Spleen (tissue), 13 donors: ENCODE measurements at regions of chr3 and their contacts with region 1.

Region 1: DNA sequence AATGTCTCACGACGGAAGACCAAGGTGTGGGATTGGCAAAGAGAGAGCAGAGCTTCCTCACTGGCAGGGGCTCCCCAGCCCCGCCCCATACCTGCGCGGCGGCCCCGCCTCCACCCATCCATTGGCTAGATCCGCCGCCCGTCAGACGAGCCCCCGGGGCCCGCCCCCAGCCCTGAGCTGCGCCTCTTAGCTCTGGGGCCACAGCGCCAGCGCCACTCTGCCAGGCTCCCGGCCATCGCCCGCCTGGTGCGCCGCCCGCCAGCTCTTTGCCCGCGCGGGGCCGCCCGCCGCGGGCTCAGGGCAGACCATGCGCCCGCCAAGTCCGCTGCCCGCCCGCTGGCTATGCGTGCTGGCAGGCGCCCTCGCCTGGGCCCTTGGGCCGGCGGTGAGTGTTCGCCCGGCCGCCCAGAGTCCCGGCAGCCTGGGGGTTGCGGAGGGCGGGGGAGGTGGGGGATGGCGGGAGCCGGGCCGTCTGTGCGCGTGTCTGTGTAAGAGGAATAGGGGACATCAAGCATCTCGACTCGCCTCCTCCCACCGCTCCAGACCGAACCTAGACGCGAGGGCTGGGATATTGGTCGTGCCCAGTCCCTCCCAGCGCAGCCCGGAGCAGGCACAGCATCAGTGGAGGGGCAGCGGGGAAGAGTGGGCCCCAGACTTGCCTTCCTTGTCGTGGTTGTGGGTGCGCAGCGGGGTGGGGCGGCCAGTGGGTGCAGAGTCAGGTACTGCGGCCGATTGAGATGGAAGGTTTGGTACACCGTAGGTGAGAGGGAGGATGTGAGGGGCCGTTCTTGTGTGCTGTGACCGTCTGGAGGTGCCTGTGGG is at the start of gene VIPR1:
- DNase-seq: peak; percentile 95
- H3K4me3 ChIP-seq: peak within 1 kb of the TSS; percentile 45 to 86 (median 56)
- H3K27ac ChIP-seq: peak within 1 kb of the TSS in 5 of 8 donors; percentile 17 to 72 (median 45)
- H3K4me1 ChIP-seq: peaks cover 10 to 52% (median 29%) of the 10 kb centered on the region in 6 donors
- H3K27me3 ChIP-seq: peaks cover 0 to 48% (median 13%) of the 10 kb centered on the region in 7 donors
- CTCF ChIP-seq: no peak
- POLR2A ChIP-seq: peak in 1 of 3 donors; percentile 38
- total RNA-seq, gene VIPR1: 6.8 to 16.3 (median 11.9) TPM

Region 2: DNA sequence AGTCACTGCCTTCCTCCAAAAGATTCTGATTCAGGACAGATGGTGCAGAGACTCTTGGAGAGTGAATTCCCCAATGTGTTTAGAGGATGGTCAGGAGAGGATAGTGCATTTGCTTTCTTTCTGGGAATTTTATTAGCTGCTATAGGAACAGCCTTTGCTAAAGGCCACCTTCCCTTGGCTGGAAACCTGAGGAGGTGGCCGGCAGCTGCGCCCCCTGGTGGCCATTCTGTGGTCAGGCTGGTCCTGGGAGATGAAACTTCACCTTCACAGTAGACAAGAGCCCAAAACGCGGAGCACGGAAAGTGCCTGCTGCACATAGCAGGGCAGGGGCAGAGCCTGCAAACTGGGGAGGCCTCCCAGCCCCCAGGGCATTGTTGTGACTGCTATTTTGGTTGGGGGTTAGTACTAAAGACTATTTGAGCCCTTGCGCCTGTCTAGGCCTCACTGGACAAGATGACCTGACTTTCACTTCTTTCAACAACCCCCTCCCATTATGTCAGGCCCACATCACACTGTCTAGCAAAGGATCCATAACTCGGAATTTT is 44.8 kb after region 1 on chr3:
- intact Hi-C with region 1: loop called (anchors 5 kb)
- DNase-seq: peak; percentile 94
- H3K4me3 ChIP-seq: no peak overlapping the region
- H3K27ac ChIP-seq: no peak overlapping the region
- H3K4me1 ChIP-seq: peaks cover 0 to 22% (median 5%) of the 10 kb centered on the region in 6 donors
- H3K27me3 ChIP-seq: no peaks in the 10 kb centered on the region
- CTCF ChIP-seq: peak; percentile 65 to 96 (median 91)
- POLR2A ChIP-seq: no peak

Region 3: DNA sequence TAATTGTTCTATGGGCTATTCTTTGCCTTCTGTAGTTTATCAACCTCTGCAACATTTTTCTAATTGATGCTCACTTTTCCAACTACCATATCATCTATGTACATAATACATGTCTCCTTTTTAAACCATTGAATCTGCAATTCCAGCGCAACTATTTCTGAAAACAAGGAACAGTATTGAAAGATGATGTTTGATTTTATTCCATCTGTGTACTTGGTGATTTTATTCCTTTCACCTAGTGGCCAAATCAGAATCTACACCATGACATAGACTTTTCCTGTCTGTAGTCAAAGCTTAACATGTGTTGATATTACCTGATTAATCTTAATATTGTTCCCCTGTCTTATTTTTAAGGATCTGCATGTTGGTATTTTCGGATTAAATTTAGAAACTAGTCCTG is 110.8 kb after region 1 on chr3:
- intact Hi-C with region 1: no loop called
- DNase-seq: no peak
- H3K4me3 ChIP-seq: no peak overlapping the region
- H3K27ac ChIP-seq: peak overlapping the region in 4 of 8 donors; percentile 60 to 77 (median 72)
- H3K4me1 ChIP-seq: peaks cover 15 to 87% (median 59%) of the 10 kb centered on the region in 6 donors
- H3K27me3 ChIP-seq: no peaks in the 10 kb centered on the region
- CTCF ChIP-seq: peak in 9 of 11 experiments; percentile 20 to 51 (median 48)
- POLR2A ChIP-seq: no peak